ENCODE measurements at regions of chr3 and their contacts with region 1.

Region 1: DNA sequence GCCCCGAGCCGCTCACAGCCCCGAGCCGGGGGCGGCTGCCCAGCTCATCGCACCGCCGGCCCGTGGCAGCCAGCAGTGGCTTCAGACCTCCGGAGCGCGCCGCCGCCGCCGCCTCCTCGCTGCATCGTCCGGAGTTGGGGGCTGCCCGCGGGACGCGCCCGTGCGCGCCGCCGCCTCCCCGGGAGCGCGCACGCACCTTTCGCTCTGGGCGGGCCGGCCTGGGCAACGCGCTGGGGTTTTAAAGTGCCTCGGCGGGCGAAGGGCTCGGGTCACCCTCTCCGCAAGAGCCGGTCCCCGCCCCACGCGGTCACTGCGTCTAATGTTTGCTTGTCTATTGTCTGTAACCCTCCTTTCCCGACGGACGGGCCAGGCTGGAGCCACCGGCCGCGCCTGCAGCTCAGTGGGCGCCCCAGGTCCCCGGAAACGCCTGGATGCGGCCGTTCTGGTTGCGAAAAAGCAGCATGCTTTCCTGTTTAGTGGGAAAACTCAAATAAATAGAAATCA is at the start of gene RYK:
- H3K4me3 Mint-ChIP-seq: peak within 1 kb of the TSS; percentile 85
- H3K27ac Mint-ChIP-seq: peak within 1 kb of the TSS; percentile 88
- H3K4me1 Mint-ChIP-seq: peaks cover 78% of the 10 kb centered on the region
- H3K27me3 Mint-ChIP-seq: peaks cover 2% of the 10 kb centered on the region

Region 2: GRCh38 chr3:134348524-134348923 is 97.8 kb after region 1 on chr3:
- intact Hi-C with region 1: no loop called
- H3K4me3 Mint-ChIP-seq: no peak overlapping the region
- H3K27ac Mint-ChIP-seq: no peak overlapping the region
- H3K4me1 Mint-ChIP-seq: no peaks in the 10 kb centered on the region
- H3K27me3 Mint-ChIP-seq: no peaks in the 10 kb centered on the region

Region 3: DNA sequence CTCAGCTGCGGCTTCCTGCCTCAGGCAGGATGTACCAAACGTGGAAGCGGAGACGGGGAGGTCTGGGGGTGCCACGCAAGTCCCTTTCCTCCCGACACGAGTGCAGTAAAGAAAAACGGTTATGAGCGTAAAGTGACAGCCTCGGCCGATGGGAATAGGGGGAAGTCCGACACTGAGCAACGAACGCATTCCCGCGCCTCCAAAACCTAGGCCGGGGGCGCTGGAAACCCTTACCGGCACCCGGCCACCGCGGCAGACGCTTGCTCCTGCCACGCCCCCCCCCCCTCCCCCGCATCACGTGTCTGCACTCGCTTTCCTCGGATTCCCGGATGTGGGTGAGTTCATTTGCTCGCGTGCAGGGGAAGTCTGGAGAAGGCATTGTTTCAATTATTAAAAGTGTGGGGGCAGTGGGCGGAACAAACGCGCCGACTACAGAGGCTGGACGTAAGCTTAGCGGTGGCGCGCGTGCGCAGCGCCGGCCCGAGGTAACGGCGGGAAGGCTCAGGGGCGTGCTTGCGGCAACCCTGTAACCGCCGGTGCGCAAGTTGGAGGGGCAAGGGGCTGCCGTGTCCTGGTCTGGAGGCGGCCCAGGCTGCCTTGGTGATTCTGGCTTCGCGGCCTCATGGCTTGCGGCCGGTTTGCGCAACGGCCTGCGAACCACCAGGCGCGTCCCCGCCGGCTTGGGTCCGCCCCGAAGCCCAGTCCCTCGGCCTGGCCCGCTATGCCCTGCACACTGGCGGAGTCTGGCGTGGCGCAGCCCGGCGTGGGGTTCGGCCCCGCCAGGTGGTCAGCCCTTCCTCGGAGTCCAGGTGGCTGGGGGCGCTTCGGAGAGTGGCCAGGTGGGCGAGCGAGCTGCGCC is 235.2 kb after region 1 on chr3 and contains the starts of genes ANAPC13 and CEP63:
- intact Hi-C with region 1: loop called (anchors 5 kb)
- H3K4me3 Mint-ChIP-seq: peak within 1 kb of the TSS; percentile 89
- H3K27ac Mint-ChIP-seq: peak within 1 kb of the TSS; percentile 98
- H3K4me1 Mint-ChIP-seq: peaks cover 53% of the 10 kb centered on the region
- H3K27me3 Mint-ChIP-seq: no peaks in the 10 kb centered on the region

Measured in dendritic cell treated with granulocyte-macrophage colony-stimulating factor and Interleukin-4, amounts not matched to agents 40 ng/mL and 50 ng/mL, for 4 days (primary cell).